Right cardiac atrium (tissue), 5 donors: ENCODE measurements at regions of chr11 and their contacts with region 1.

Region 1: DNA sequence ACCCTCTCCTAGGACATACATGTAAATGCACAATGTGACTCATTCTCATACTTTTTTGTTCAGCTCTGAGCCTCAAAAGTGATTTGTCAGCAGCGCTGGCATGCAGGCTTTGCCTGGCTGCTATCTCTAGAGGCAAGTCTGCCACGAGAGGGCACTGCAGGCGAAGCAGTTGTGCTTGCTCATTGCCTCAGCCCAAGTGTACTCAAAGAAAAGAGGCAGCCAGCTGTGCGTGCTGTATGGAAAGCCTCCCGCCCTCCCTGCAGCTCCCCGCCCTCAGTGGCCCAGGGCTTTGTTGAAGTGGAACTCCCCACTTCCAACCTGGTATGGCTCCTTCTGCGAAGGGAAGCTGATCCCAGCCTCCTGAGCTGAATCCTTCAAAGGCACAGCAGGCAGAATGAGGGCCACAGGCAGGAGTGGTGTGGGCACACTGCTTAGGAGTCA is 16.3 kb downstream of the SDHAF2 start:
- DNase-seq: peak; percentile 93 to 97 (median 96)
- ATAC-seq: peak; percentile 89
- H3K4me3 ChIP-seq: no peak overlapping the region
- H3K27ac ChIP-seq: peak overlapping the region; percentile 78
- H3K4me1 ChIP-seq: peaks cover 9% of the 10 kb centered on the region
- H3K27me3 ChIP-seq: no peaks in the 10 kb centered on the region

Region 2: GRCh38 chr11:61294717-61295595 is 151.3 kb before region 1 on chr11 and contains the start of gene VWCE:
- intact Hi-C with region 1: no loop called
- DNase-seq: peak; percentile 61 to 84 (median 83)
- ATAC-seq: peak; percentile 67 to 71
- H3K4me3 ChIP-seq: peak within 1 kb of the TSS; percentile 62
- H3K27ac ChIP-seq: no peak within 1 kb of the TSS
- H3K4me1 ChIP-seq: peaks cover 8% of the 10 kb centered on the region
- H3K27me3 ChIP-seq: no peaks in the 10 kb centered on the region
- total RNA-seq, gene VWCE: 0.97 to 2.2 (median 1.3) TPM

Region 3: DNA sequence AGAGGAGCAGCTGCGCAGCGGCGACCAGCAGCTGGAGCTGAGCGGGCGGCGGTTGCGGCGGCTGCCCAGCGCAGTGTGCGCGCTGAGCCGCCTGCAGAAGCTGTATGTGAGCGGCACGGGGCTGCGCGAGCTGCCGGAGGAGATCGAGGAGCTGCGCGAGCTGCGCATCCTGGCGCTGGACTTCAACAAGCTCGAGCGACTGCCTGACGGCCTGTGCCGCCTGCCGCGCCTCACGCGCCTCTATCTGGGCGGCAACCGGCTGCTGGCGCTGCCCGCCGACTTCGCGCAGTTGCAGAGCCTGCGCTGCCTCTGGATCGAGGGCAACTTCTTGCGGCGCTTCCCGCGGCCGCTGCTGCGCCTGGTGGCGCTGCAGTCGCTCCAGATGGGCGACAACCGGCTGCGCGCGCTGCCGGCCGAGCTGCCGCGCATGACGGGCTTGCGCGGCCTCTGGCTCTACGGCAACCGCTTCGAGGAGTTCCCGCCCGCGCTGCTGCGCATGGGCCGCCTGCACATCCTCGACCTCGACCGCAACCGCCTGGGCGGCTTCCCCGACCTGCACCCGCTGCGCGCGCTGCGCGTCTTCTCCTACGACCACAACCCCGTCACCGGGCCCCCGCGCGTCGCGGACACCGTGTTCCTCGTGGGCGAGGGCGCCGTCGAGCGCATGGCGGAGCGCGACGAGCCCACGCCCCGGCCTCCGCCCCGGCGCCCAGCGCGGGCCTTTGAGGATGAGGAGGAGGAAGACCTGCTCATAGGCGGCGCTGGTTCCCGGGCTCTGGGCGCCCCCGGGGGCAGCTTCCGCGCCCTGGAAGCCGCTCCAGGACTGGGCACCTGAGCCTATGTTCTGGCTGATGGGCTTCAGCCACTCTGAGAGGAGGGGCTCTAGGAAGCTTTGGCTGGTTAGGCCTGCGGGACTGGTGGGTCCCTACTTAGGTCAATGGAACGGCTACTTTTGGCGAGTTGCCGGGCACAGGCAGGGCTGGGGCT is 63.1 kb after region 1 on chr11:
- intact Hi-C with region 1: loop called in 2 of 4 experiments (anchors 10 kb)
- DNase-seq: peak; percentile 79 to 88 (median 88)
- ATAC-seq: peak; percentile 83 to 85
- H3K4me3 ChIP-seq: peak overlapping the region; percentile 6
- H3K27ac ChIP-seq: no peak overlapping the region
- H3K4me1 ChIP-seq: no peaks in the 10 kb centered on the region
- H3K27me3 ChIP-seq: no peaks in the 10 kb centered on the region

Region 4: DNA sequence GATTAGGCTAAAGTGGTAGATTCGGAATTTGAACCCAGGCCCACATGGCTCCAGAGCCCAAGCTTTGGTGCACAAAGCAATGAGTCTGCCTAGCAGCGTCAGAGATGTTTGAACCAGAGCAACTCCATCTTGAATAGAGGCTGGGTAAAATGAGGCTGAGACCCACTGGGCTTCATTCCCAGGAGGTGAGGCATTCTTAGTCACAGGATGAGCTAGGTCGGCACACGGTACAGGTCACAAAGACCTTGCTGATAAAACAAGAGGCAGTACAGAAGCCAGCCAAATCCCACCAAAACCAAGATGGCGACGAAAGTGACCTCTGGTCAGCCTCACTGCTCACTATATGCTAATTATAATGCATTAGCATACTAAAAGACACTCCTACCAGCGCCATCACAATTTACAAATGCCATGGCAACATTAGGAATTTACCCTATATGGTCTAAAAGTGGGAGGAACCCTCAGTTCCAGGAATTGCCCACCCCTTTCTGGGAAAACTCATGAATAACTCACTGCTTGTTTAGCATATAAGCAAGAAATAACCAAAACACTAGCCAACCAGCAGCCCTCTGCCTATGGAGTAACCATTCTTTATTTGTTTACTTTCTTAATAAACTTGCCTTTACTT is 193.7 kb after region 1 on chr11:
- intact Hi-C with region 1: loop called in 2 of 4 experiments (anchors 10 kb)
- DNase-seq: no peak
- ATAC-seq: no peak
- H3K4me3 ChIP-seq: no peak overlapping the region
- H3K27ac ChIP-seq: no peak overlapping the region
- H3K4me1 ChIP-seq: no peaks in the 10 kb centered on the region
- H3K27me3 ChIP-seq: no peaks in the 10 kb centered on the region